Activated B cell treated with CpG ODN at 0.5 μM for 24 hours (primary cell): ENCODE measurements at regions of chr3 and their contacts with region 1.

Region 1: DNA sequence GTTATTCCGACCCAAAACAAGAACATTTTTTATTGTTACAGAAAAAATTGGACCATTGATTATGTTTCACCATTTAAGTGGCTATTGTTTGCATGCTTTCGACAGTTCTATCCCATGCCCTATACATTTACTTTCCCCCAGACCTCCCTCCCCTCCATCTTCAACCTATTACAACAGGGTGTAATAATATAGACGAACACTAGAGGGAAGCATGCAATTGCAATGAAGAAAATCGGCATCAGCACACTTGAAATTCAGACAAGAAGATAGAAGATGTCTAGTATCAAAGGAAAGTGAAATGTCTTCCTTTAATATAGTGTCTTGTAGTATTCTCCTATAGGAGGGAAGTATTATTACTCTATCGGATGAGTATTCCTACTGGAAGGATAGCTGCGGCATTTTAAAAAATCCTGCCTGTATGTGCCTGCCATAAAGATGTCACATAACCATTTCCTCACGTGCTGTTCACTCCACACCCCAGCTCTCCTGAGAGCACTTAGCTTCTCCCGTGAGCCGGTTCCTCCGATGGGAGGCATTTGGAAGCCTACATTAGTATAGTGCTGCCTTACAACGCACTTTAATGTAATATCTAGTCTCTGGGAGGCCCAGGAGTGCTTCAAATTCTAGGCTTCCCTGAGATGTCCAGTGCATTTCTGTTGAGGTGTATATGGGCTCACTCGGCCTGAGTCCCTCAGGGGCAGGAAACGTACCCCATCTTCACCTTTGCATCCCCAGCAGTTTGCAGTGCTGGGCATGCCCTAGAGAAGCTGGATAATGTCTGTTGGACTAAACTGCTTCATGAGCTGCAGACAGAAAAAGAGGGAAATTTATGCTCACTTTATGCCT is 17.8 kb upstream of the ERICH6 start:
- DNase-seq: no peak
- ATAC-seq: peak; percentile 94
- H3K4me3 Mint-ChIP-seq: no peak overlapping the region
- H3K27ac Mint-ChIP-seq: no peak overlapping the region
- H3K4me1 Mint-ChIP-seq: peaks cover 7% of the 10 kb centered on the region
- H3K27me3 Mint-ChIP-seq: no peaks in the 10 kb centered on the region
- CTCF ChIP-seq: no peak

Region 2: GRCh38 chr3:150253622-150254021 is 467.9 kb before region 1 on chr3:
- CTCF ChIA-PET with region 1: no interaction called
- POLR2A ChIA-PET with region 1: no interaction called
- intact Hi-C with region 1: no loop called
- DNase-seq: no peak
- ATAC-seq: no peak
- H3K4me3 Mint-ChIP-seq: no peak overlapping the region
- H3K27ac Mint-ChIP-seq: no peak overlapping the region
- H3K4me1 Mint-ChIP-seq: no peaks in the 10 kb centered on the region
- H3K27me3 Mint-ChIP-seq: peaks cover 15% of the 10 kb centered on the region
- CTCF ChIP-seq: no peak

Region 3: GRCh38 chr3:150737874-150738713 is 16.6 kb after region 1 on chr3:
- CTCF ChIA-PET with region 1: interaction called, 9 read pairs
- POLR2A ChIA-PET with region 1: interaction called, 3 read pairs
- intact Hi-C with region 1: loop called (anchors 1 kb)
- DNase-seq: no peak
- ATAC-seq: peak; percentile 11
- H3K4me3 Mint-ChIP-seq: peak overlapping the region; percentile 36
- H3K27ac Mint-ChIP-seq: peak overlapping the region; percentile 83
- H3K4me1 Mint-ChIP-seq: peaks cover 65% of the 10 kb centered on the region
- H3K27me3 Mint-ChIP-seq: no peaks in the 10 kb centered on the region
- CTCF ChIP-seq: no peak

Region 4: DNA sequence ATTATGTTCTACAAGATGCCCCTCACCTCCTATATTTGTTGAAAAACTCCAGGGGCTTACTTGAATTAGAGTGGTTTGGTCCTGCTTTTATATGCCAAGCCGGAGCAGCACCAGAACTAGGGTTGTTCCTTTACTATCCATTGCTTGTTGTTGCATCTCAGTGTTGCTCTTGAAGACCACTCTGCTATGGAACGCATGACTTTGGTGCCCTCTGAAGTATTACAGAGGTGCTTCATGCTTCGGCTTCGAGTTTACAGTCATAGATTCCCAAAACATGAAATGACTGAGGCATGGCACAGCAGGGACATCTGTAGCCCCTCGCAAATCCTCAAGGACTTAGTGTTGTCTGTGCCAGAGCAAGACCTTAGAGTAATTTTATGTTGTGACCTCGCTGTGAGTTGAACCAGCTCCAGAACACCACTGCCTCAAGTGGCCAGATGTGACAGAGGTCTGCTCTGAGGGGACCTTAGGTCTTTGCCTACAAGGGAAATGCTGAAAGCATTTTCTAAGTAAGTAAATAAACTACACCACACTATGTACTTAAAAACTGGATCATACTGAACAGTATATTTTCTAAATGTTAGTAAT is 108.7 kb after region 1 on chr3:
- CTCF ChIA-PET with region 1: interaction called, 14 read pairs
- POLR2A ChIA-PET with region 1: no interaction called
- intact Hi-C with region 1: loop called (anchors 1 kb)
- DNase-seq: no peak
- ATAC-seq: peak; percentile 60
- H3K4me3 Mint-ChIP-seq: no peak overlapping the region
- H3K27ac Mint-ChIP-seq: no peak overlapping the region
- H3K4me1 Mint-ChIP-seq: peaks cover 6% of the 10 kb centered on the region
- H3K27me3 Mint-ChIP-seq: peaks cover 4% of the 10 kb centered on the region
- CTCF ChIP-seq: no peak

Region 5: DNA sequence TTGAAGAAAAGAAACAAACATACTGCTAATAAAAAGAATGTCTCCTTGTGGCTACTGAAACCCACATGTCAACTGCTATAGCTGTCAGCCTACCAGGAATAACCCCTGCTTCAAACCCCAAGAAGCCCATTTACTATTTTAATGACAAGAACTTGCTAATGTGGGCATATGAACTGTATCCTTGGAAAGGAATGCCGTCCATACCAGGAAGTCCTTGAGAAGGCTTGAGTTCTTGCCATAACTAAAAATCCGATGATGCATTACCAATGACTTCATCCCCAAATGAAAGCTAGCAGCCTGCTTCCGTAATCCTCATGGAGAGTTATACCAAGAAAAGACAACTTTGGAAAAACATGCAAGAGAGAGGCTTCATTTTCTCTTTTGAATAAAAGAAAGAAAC is 148.9 kb after region 1 on chr3:
- CTCF ChIA-PET with region 1: interaction called, 45 read pairs
- POLR2A ChIA-PET with region 1: no interaction called
- intact Hi-C with region 1: loop called (anchors 1 kb)
- DNase-seq: no peak
- ATAC-seq: no peak
- H3K4me3 Mint-ChIP-seq: no peak overlapping the region
- H3K27ac Mint-ChIP-seq: no peak overlapping the region
- H3K4me1 Mint-ChIP-seq: peaks cover under 1% of the 10 kb centered on the region
- H3K27me3 Mint-ChIP-seq: peaks cover 4% of the 10 kb centered on the region
- CTCF ChIP-seq: no peak

Region 6: DNA sequence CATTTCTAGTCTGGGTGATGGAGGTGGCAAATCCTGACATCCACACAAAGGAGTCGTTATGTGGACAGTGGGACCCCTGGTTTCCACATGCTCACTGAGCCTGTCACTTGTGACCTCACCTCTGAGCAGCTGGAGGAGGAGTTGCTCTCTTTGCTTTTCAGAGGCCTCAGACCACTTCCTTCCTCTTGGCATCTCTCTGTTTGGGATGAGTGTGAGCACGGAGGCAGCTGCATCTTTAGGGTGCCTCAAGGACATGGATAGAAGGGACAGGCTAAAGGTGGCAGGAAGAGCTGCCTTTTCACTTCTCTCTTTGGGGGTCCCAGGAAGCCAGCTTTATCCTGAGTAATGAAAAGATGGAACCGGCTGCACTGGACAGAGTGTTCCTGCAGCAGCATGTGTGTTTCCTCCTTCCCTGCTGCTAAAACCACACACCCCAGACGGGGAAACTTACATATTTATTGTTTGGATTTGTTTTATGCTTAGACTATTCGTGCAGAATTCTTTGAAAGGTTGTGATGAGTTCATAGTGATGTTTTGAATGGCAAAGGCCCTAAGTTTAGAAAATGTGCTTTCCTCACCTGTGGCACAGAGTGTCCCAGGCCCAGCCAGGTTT is 449.7 kb after region 1 on chr3:
- CTCF ChIA-PET with region 1: no interaction called
- POLR2A ChIA-PET with region 1: no interaction called
- intact Hi-C with region 1: no loop called
- DNase-seq: no peak
- ATAC-seq: no peak
- H3K4me3 Mint-ChIP-seq: no peak overlapping the region
- H3K27ac Mint-ChIP-seq: peak overlapping the region; percentile 82
- H3K4me1 Mint-ChIP-seq: peaks cover 45% of the 10 kb centered on the region
- H3K27me3 Mint-ChIP-seq: no peaks in the 10 kb centered on the region
- CTCF ChIP-seq: no peak

Region 7: GRCh38 chr3:151362751-151363174 is 641.3 kb after region 1 on chr3:
- CTCF ChIA-PET with region 1: no interaction called
- POLR2A ChIA-PET with region 1: no interaction called
- intact Hi-C with region 1: no loop called
- DNase-seq: no peak
- ATAC-seq: no peak
- H3K4me3 Mint-ChIP-seq: no peak overlapping the region
- H3K27ac Mint-ChIP-seq: no peak overlapping the region
- H3K4me1 Mint-ChIP-seq: peaks cover 6% of the 10 kb centered on the region
- H3K27me3 Mint-ChIP-seq: no peaks in the 10 kb centered on the region
- CTCF ChIP-seq: no peak